ENCODE measurements at regions of chr12 and their contacts with region 1.

Region 1: DNA sequence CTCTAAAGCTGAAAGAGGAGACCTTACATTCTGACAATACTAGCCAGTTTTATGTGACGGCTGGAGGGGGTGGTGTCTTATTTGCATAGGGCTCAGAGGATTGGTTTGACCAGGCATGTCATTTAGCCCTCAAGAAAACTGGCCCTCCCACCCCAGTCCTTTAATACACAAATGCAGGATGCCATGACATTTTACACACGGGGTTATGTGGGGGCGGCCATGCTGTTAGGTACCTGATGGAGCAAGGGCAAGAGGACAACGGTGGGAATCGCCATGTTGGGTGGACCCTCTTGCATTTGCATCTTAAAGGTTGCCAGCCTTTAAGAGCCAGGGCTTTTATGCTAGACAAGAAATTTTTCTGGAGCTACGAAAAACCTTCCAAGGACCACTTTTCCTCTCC is 23.3 kb downstream of the MDM2 start:
- DNase-seq: no peak
- H3K4me3 Mint-ChIP-seq: no peak overlapping the region
- H3K27ac Mint-ChIP-seq: no peak overlapping the region
- H3K4me1 Mint-ChIP-seq: peaks cover 13% of the 10 kb centered on the region
- H3K27me3 Mint-ChIP-seq: no peaks in the 10 kb centered on the region
- CTCF ChIP-seq: no peak

Region 2: GRCh38 chr12:68815232-68815927 is 15.9 kb before region 1 on chr12:
- CTCF ChIA-PET with region 1: interaction called, 28 read pairs
- POLR2A ChIA-PET with region 1: interaction called, 23 read pairs
- intact Hi-C with region 1: no loop called
- DNase-seq: no peak
- H3K4me3 Mint-ChIP-seq: peak overlapping the region; percentile 90
- H3K27ac Mint-ChIP-seq: no peak overlapping the region
- H3K4me1 Mint-ChIP-seq: peaks cover 14% of the 10 kb centered on the region
- H3K27me3 Mint-ChIP-seq: no peaks in the 10 kb centered on the region
- CTCF ChIP-seq: no peak

Region 3: GRCh38 chr12:68844788-68845695 is 13.8 kb after region 1 on chr12:
- CTCF ChIA-PET with region 1: interaction called, 18 read pairs
- POLR2A ChIA-PET with region 1: interaction called, 15 read pairs
- intact Hi-C with region 1: no loop called
- DNase-seq: no peak
- H3K4me3 Mint-ChIP-seq: no peak overlapping the region
- H3K27ac Mint-ChIP-seq: no peak overlapping the region
- H3K4me1 Mint-ChIP-seq: no peaks in the 10 kb centered on the region
- H3K27me3 Mint-ChIP-seq: no peaks in the 10 kb centered on the region
- CTCF ChIP-seq: no peak

Region 4: DNA sequence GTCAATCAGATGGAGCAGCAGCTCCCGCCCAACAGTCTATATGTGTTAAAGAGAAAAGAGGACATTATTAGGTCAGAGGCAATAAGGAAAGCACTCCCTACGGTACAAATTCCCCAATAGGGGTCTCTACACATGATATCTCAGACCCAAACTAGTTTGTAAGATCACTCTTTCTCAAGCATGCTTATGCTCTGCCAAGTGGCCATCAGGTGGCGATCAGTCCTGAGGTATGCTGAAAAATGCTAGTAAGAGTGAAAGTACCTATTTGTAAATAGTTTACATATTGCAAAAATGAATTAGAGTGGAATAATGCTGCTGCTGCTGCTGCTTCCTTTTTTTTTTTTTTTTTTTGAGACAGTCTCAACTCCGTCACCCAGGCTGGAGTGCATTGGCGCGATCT is 40.6 kb after region 1 on chr12:
- CTCF ChIA-PET with region 1: no interaction called
- POLR2A ChIA-PET with region 1: no interaction called
- intact Hi-C with region 1: no loop called
- DNase-seq: peak; percentile 34
- H3K4me3 Mint-ChIP-seq: no peak overlapping the region
- H3K27ac Mint-ChIP-seq: no peak overlapping the region
- H3K4me1 Mint-ChIP-seq: no peaks in the 10 kb centered on the region
- H3K27me3 Mint-ChIP-seq: no peaks in the 10 kb centered on the region
- CTCF ChIP-seq: peak; percentile 18

Measured in MCF 10A (cell line).